Transverse colon (tissue), 4 donors: ENCODE measurements at regions of chr17 and their contacts with region 1.

Region 1: GRCh38 chr17:67390646-67391384 is 13.7 kb downstream of the PITPNC1 start:
- DNase-seq: peak; percentile 41
- H3K4me3 ChIP-seq: no peak overlapping the region
- H3K27ac ChIP-seq: peak overlapping the region; percentile 38 to 60 (median 48)
- H3K4me1 ChIP-seq: peaks cover 0 to 7% (median 3%) of the 10 kb centered on the region in 4 donors
- H3K27me3 ChIP-seq: no peaks in the 10 kb centered on the region
- CTCF ChIP-seq: no peak
- EP300 ChIP-seq: no peak
- POLR2A ChIP-seq: no peak

Region 2: DNA sequence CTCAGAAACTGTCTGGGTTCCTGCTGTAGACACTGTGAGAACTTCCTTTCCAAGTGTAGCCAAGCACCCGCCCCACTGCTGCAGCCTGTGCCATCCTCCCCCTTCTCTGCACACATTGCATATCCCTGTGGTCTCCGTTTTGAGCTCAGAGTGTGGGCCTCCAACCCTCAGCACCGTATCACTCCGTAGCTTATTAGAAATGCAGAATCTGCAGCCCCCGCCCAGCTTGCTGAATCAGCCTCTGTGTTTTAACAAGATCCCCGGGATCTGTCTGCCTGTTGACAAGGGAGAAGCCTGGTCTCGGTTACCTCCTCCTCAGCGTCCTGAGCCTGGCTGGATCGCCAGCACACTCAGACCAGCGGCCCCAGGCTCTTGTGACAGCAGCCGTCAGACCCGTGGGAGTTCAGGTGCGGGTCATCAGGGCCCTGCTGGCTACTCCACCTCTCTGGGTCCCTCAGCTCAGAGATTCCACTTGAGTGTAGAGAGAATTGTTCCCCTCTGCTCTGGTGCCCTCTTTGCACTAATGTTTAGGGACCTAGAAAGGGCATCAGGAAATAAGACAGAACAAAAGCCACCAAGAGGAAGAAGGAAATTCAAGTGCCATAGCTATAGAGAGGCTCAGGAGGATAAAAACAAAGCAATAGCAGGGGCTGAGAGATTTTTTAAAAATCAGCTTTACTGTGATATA is 78.5 kb after region 1 on chr17:
- in situ Hi-C with region 1: loop called in 2 of 4 experiments (anchors 10 kb)
- intact Hi-C with region 1: no loop called
- DNase-seq: no peak
- H3K4me3 ChIP-seq: no peak overlapping the region
- H3K27ac ChIP-seq: peak overlapping the region in 3 of 4 donors; percentile 8 to 53 (median 36)
- H3K4me1 ChIP-seq: peaks cover 0 to 10% (median 0%) of the 10 kb centered on the region in 4 donors
- H3K27me3 ChIP-seq: no peaks in the 10 kb centered on the region
- CTCF ChIP-seq: no peak
- EP300 ChIP-seq: no peak
- POLR2A ChIP-seq: no peak

Region 3: GRCh38 chr17:67475236-67475937 is 84.6 kb after region 1 on chr17:
- in situ Hi-C with region 1: loop called in 2 of 4 experiments (anchors 5 to 10 kb)
- intact Hi-C with region 1: loop called (anchors 5 kb)
- DNase-seq: peak; percentile 86
- H3K4me3 ChIP-seq: no peak overlapping the region
- H3K27ac ChIP-seq: peak overlapping the region; percentile 31 to 65 (median 42)
- H3K4me1 ChIP-seq: peaks cover 0 to 16% (median 2%) of the 10 kb centered on the region in 4 donors
- H3K27me3 ChIP-seq: no peaks in the 10 kb centered on the region
- CTCF ChIP-seq: peak; percentile 82 to 93 (median 92)
- EP300 ChIP-seq: no peak
- POLR2A ChIP-seq: peak; percentile 14

Region 4: GRCh38 chr17:67481808-67482207 is 91.0 kb after region 1 on chr17:
- in situ Hi-C with region 1: loop called in 2 of 4 experiments (anchors 5 to 10 kb)
- intact Hi-C with region 1: loop called (anchors 5 kb)
- DNase-seq: no peak
- H3K4me3 ChIP-seq: no peak overlapping the region
- H3K27ac ChIP-seq: peak overlapping the region in 1 of 4 donors; percentile 20
- H3K4me1 ChIP-seq: peaks cover 0 to 6% (median 2%) of the 10 kb centered on the region in 4 donors
- H3K27me3 ChIP-seq: no peaks in the 10 kb centered on the region
- CTCF ChIP-seq: no peak
- EP300 ChIP-seq: no peak
- POLR2A ChIP-seq: no peak

Region 5: GRCh38 chr17:67689534-67690177 is 298.8 kb after region 1 on chr17:
- in situ Hi-C with region 1: loop called in 2 of 4 experiments (anchors 10 to 25 kb)
- intact Hi-C with region 1: no loop called
- DNase-seq: peak; percentile 27
- H3K4me3 ChIP-seq: no peak overlapping the region
- H3K27ac ChIP-seq: no peak overlapping the region
- H3K4me1 ChIP-seq: no peaks in the 10 kb centered on the region
- H3K27me3 ChIP-seq: no peaks in the 10 kb centered on the region
- CTCF ChIP-seq: peak; percentile 71 to 81 (median 77)
- EP300 ChIP-seq: no peak
- POLR2A ChIP-seq: no peak